Sciatic nerve (tissue), 2 donors: ENCODE measurements at regions of chr2 and their contacts with region 1.

Region 1: DNA sequence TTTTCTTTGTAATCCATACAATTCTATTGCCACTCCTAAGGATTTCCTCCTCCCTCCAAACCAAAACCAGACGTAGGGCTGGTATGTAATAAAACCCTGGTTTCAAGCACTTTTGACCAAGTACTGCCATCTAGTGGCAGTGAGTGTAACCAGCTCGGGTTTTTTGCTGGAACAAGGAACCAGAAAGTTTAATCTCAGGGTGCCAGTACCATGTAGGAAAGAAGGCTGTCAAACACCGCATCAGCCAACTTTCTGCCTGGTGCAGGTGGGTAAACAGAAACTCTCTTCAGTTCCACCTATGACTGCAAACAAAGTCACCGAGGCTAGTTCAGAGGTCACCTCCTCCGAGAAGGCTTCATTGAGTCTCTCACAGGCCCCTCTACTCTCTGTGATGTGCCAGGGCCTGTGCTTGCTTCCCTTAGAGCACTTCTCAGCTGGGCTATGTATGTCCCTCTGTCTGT is 10.2 kb upstream of the THNSL2 start:
- DNase-seq: no peak
- ATAC-seq: peak; percentile 70

Region 2: DNA sequence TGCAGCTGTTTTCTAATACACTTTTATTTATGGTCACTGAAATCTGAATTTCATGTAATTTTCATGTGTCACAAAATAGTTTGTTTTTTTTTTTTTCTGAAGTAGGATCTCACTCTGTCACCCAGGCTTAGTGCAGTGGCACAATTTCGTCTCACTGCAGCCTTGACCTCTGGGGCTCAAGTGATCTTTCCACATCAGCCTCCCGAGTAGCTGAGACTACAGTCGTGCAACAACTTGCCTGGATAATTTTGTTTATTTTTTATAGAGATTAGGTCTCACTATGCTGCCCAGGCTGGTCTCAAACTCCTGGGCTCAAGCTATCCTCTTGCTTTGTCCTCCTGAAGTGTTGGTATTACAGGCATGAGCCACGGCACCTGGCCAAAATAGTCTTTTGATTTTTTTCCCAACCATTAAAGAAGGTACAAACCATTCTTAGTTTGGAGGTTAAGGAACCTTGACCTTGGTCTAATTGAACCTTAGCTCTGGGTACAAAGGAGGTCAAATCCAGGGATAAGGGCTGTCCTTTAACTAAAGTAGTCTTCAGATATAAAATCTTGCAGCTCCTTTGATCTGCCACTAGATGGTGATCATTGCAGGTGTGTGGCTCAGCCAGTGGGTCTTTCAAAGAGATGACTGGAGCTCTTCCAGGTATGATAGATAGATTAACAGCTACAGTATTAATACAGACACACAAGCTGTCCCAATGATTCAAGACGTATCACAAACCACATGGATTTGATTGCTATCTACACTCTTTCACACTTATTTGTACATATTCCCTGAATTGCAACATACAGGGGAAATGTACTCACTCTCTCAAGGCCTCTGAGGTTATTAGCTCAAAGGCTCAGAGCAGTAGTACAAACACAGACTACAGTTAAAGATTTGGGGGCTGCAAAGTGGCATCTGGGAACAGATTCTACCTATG is 99.7 kb before region 1 on chr2:
- intact Hi-C with region 1: loop called (anchors 5 kb)
- DNase-seq: no peak
- ATAC-seq: no peak

Region 3: GRCh38 chr2:88265349-88266303 is 105.6 kb after region 1 on chr2:
- intact Hi-C with region 1: no loop called
- DNase-seq: no peak
- ATAC-seq: peak; percentile 46